ENCODE measurements at regions of chr15 and their contacts with region 1.

Region 1: GRCh38 chr15:52227456-52227855 is 36.3 kb upstream of the GNB5 start:
- DNase-seq: peak; percentile 85
- H3K4me3 Mint-ChIP-seq: no peak overlapping the region
- H3K27ac Mint-ChIP-seq: no peak overlapping the region
- H3K4me1 Mint-ChIP-seq: peaks cover 17% of the 10 kb centered on the region
- H3K27me3 Mint-ChIP-seq: no peaks in the 10 kb centered on the region

Region 2: DNA sequence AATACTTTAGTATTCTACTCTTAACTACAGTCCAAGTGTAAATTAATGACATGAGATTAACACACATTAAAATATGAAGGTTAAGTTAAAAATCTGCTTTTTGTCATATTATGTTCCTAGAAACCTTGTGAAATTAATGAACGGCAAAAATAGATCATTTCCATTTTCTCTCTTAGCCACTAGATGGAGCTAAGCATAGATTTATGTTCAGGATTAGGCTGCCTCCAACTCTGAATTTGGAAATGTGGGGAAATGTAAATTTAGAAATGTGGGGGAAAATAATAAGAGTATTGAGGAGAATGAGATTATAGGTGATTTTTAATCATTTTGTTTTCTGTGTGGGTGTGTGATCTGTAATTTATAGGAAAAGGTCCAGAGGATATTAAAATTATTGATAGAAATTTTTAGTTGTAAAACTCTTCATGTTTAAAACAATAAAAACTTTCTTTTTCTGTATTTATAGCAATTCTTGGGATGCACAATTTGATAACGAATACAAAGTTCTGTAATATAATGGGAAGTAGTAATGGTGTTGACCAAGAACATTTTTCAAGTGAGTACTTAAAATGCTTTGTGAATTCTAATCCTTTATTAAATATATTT is 338.8 kb before region 1 on chr15:
- CTCF ChIA-PET with region 1: interaction called, 4 read pairs
- intact Hi-C with region 1: loop called (anchors 1 kb)
- DNase-seq: no peak
- H3K4me3 Mint-ChIP-seq: no peak overlapping the region
- H3K27ac Mint-ChIP-seq: no peak overlapping the region
- H3K4me1 Mint-ChIP-seq: peaks cover 2% of the 10 kb centered on the region
- H3K27me3 Mint-ChIP-seq: no peaks in the 10 kb centered on the region

Region 3: DNA sequence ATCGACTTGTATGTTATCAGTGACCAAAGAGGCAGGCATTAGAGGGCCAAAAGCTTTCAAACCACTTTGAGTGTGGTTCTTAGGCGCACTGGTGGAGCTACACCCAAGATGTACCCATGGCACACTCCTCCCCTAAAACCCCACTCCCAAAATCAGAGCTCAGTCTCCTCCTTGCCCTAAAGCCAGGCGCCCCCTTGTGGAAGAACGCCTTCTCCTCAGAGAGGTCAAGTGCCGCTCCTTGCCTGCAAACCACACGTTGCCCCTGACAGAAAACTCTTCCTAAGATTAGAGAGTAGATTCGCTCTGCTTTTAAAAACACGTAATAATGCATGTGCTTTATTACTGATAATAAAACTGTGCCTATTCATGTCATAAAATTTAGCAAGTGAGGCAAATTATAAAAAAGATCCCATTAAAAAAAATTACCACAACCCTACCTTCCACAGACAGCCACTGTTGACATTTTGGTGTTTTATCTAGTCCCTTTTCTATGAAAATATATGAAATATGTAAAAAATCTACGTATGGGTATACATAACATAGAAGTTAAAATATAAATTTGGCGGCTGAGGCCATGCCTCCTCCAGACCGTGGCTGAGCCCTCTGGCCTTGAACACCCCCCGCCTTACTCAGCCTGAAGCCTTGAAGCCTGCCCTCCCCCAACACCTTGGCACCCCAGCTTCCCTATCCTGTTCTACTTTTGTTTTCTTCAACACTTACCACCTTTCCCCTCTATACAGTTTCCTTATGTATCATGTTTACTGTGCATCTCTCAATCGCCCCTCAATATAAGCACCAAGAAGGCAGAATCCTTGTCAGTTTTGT is 148.4 kb before region 1 on chr15:
- CTCF ChIA-PET with region 1: interaction called, 8 read pairs
- intact Hi-C with region 1: loop called (anchors 1 kb)
- DNase-seq: peak; percentile 93
- H3K4me3 Mint-ChIP-seq: no peak overlapping the region
- H3K27ac Mint-ChIP-seq: no peak overlapping the region
- H3K4me1 Mint-ChIP-seq: peaks cover 2% of the 10 kb centered on the region
- H3K27me3 Mint-ChIP-seq: no peaks in the 10 kb centered on the region

Region 4: GRCh38 chr15:52163321-52164190 is 63.9 kb before region 1 on chr15:
- CTCF ChIA-PET with region 1: interaction called, 14 read pairs
- intact Hi-C with region 1: no loop called
- DNase-seq: peak; percentile 29
- H3K4me3 Mint-ChIP-seq: no peak overlapping the region
- H3K27ac Mint-ChIP-seq: no peak overlapping the region
- H3K4me1 Mint-ChIP-seq: peaks cover 28% of the 10 kb centered on the region
- H3K27me3 Mint-ChIP-seq: no peaks in the 10 kb centered on the region

Region 5: DNA sequence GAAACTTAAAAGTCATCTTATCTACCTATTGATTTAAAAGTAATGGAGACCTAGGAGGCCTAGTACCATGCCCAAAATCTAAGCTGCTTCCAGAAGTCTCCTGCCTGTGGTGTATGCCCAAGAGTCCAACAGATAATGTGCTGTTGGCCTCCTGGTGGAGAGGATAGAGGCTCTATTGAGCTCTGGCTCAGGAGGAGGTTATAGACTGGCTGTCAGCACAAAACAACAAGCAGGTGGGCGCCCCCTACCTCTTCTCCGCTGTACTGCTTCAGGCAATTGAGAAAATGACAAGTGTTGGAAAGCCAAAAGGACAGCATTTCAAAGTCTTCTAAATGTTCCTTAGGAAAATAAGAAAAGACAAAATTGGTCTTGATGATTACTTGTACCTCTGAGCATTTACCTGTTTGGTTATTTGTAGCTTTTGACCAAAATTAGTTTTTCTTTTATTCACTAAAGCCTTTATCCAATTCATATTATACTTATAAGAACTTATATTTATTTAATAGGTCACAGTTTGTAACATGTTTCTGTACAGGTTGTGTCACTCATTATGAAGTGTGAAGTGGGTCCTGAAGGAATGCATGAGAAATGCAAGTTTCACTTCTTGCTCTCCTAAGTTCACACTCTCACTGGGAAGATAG is 19.0 kb before region 1 on chr15:
- CTCF ChIA-PET with region 1: interaction called, 21 read pairs
- intact Hi-C with region 1: loop called (anchors 2 kb)
- DNase-seq: peak; percentile 91
- H3K4me3 Mint-ChIP-seq: no peak overlapping the region
- H3K27ac Mint-ChIP-seq: no peak overlapping the region
- H3K4me1 Mint-ChIP-seq: no peaks in the 10 kb centered on the region
- H3K27me3 Mint-ChIP-seq: no peaks in the 10 kb centered on the region

Region 6: GRCh38 chr15:52241489-52241888 is 14.0 kb after region 1 on chr15:
- CTCF ChIA-PET with region 1: interaction called, 15 read pairs
- intact Hi-C with region 1: no loop called
- DNase-seq: peak; percentile 23
- H3K4me3 Mint-ChIP-seq: no peak overlapping the region
- H3K27ac Mint-ChIP-seq: peak overlapping the region; percentile 65
- H3K4me1 Mint-ChIP-seq: peaks cover 10% of the 10 kb centered on the region
- H3K27me3 Mint-ChIP-seq: no peaks in the 10 kb centered on the region

Measured in activated naive CD4-positive, alpha-beta T cell treated with anti-CD3 and anti-CD28 coated beads for 36 hours (primary cell).